ENCODE measurements at regions of chr19 and their contacts with region 1.

Region 1: GRCh38 chr19:19821366-19821951 is at the start of gene ZNF506:
- DNase-seq: peak; percentile 91
- ATAC-seq: peak; percentile 95
- H3K4me3 Mint-ChIP-seq: peak within 1 kb of the TSS; percentile 98
- H3K27ac Mint-ChIP-seq: peak within 1 kb of the TSS; percentile 99
- H3K4me1 Mint-ChIP-seq: peaks cover 15% of the 10 kb centered on the region
- H3K27me3 Mint-ChIP-seq: no peaks in the 10 kb centered on the region
- total RNA-seq, gene ZNF506: 39.4 to 41.5 TPM

Region 2: GRCh38 chr19:19663256-19664038 is 158.0 kb before region 1 on chr19 and contains the start of gene ATP13A1:
- POLR2A ChIA-PET with region 1: interaction called, 30 read pairs
- DNase-seq: peak; percentile 92
- ATAC-seq: peak; percentile 79
- H3K4me3 Mint-ChIP-seq: peak within 1 kb of the TSS; percentile 93
- H3K27ac Mint-ChIP-seq: peak within 1 kb of the TSS; percentile 98
- H3K4me1 Mint-ChIP-seq: peaks cover 26% of the 10 kb centered on the region
- H3K27me3 Mint-ChIP-seq: no peaks in the 10 kb centered on the region
- total RNA-seq, gene ATP13A1: 108 to 115 TPM

Region 3: DNA sequence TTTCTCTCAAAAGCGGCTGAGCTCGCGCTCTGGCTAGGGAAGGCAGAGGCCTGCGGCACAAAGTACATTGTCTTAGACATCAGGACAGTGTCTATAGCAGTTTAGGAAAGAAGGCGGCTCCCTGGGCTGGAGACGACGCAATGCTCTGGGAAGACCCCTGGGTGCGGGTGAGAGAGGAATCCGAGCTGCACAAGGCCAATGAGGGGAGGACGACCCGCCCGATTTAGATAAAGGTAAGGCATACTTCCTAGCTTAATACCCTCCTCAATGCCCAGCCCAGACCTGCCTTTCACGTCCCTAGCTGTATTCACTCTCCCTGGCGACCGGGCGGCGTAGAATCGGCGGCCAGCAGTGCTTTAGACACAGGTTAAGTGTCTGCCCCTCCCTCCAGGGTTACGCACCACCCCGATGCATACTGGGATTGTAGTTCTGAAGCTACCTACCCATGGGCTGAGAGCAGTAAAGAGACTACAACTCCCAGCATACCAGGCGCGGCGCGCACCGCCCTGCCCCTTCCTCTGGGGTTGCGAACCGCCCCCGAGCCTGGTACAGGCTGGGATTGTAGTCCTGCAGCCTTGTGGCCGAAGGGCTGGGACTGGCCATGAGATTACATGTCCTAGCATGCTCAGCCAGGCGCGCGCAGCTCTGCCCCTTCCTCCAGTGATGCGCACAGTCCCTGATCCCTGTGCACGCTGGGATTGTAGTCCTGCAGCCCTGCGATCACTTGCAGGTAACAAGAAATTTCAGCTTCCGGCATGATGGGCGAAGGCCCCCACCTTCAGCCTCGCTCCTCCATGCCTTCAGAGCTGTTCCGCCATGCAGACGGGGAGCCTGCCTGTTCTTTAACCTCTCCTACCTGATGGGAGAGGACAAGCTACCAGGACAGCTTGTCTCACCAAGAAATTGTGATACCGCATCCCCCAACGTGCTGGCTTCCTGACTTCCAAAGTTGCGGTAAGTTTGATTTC is 45.1 kb before region 1 on chr19:
- POLR2A ChIA-PET with region 1: interaction called, 28 read pairs
- DNase-seq: peak; percentile 90
- ATAC-seq: peak; percentile 99
- H3K4me3 Mint-ChIP-seq: peak overlapping the region; percentile 93
- H3K27ac Mint-ChIP-seq: peak overlapping the region; percentile 89
- H3K4me1 Mint-ChIP-seq: peaks cover 26% of the 10 kb centered on the region
- H3K27me3 Mint-ChIP-seq: no peaks in the 10 kb centered on the region

Region 4: GRCh38 chr19:19788015-19788414 is 33.4 kb before region 1 on chr19:
- POLR2A ChIA-PET with region 1: no interaction called
- DNase-seq: no peak
- ATAC-seq: no peak
- H3K4me3 Mint-ChIP-seq: no peak overlapping the region
- H3K27ac Mint-ChIP-seq: no peak overlapping the region
- H3K4me1 Mint-ChIP-seq: peaks cover 4% of the 10 kb centered on the region
- H3K27me3 Mint-ChIP-seq: no peaks in the 10 kb centered on the region

Region 5: GRCh38 chr19:19865739-19866481 is 44.5 kb after region 1 on chr19 and contains the start of gene ZNF253:
- POLR2A ChIA-PET with region 1: interaction called, 87 read pairs
- DNase-seq: peak; percentile 91
- ATAC-seq: peak; percentile 93
- H3K4me3 Mint-ChIP-seq: peak within 1 kb of the TSS; percentile 97
- H3K27ac Mint-ChIP-seq: peak within 1 kb of the TSS; percentile 98
- H3K4me1 Mint-ChIP-seq: peaks cover 13% of the 10 kb centered on the region
- H3K27me3 Mint-ChIP-seq: no peaks in the 10 kb centered on the region
- total RNA-seq, gene ZNF253: 25.6 to 32.4 TPM

Region 6: DNA sequence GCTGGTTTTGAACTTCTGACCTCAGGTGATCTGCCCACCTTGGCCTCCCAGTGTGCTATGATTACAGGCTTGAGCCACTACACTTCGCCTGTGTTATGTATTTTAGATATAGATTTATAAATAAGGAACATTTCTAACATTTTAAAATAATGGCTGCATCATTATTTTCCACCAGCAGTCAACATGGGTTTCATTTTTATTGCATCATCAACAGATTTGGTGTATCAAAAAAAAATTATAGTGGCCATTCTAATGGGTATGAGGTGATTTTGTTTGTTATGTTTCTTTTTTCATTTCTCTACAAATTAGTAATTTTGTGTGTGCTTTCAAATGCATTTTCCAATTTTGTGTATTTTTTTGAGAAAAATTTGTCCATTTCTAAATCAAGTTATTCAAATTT is 63.1 kb after region 1 on chr19:
- POLR2A ChIA-PET with region 1: no interaction called
- DNase-seq: no peak
- ATAC-seq: no peak
- H3K4me3 Mint-ChIP-seq: no peak overlapping the region
- H3K27ac Mint-ChIP-seq: no peak overlapping the region
- H3K4me1 Mint-ChIP-seq: no peaks in the 10 kb centered on the region
- H3K27me3 Mint-ChIP-seq: no peaks in the 10 kb centered on the region

Region 7: DNA sequence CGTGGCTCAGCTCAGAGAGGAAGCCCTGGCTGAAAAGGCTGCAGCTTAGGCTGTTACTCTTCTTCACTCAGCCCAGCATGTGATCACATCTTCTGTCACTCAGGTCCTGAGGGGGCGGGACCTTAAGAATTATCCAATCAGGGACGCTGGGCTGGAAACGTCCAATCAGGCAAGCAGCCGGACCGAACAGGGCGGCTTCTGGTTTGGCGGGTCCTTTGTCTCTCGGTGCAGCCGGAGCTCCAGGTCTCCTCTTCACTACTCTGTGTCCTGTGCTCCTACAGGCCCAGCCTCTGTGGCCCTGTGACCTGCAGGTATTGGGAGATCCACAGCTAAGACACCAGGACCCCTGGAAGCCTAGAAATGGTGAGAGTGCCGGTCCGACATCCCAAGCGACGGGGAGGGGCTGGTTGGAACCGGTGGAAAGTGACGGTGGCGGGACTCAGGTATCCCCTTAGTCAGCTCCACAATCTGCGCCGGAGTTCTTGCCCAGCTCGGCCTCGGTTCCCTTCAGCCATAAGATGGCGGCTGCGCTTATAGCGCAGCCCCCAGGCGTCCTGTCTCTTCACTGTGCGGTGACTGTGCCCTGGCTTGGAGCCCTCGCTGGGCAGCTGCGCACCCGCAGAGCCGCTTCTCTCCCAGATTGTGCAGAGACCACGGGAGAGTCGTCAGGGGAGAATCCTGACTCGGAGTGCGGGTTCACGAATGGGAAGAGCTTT is 79.4 kb after region 1 on chr19 and contains the start of gene ZNF93:
- POLR2A ChIA-PET with region 1: interaction called, 44 read pairs
- DNase-seq: peak; percentile 83
- ATAC-seq: peak; percentile 96
- H3K4me3 Mint-ChIP-seq: peak within 1 kb of the TSS; percentile 93
- H3K27ac Mint-ChIP-seq: peak within 1 kb of the TSS; percentile 93
- H3K4me1 Mint-ChIP-seq: peaks cover 25% of the 10 kb centered on the region
- H3K27me3 Mint-ChIP-seq: no peaks in the 10 kb centered on the region
- total RNA-seq, gene ZNF93: 20.3 to 22.2 TPM

Measured in activated naive CD8-positive, alpha-beta T cell treated with anti-CD3 and anti-CD28 coated beads, Interleukin-2, amount 10 ng/mL, durations not matched to agents 7 days and 5 days (primary cell).